ENCODE measurements at regions of chr22 and their contacts with region 1.

Region 1: DNA sequence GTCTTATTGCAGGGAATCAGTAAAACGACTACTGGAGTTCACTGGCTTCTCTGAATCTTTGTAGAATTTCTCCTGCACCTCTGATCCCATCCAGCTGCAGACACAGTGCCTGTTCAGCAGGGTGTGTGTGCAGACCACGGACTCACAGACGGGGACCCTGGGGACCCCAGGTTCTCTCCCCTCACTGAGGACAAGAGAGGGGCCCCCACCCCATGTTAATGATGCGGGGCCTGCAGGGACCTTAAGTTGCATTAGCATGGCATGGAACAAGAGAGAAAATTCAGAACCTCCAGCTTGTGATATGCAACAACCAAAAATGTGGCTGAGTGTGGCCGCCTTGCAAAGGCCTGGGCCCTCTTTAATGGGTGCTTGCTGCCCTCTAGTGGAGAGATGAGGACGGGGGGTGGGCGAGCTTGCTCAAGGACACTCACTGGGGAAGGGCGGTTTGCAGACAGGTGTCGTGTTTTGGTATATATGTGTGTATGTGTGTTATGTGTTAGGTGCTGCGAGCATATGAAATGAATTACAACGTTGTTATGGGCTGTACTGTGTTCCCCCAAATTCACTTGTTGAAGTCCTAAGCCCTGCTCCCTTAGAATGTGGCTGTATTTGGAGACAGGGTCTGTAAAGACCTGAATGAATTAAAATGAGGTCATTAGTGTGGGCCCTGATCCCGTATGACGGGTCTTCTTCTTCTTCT is 84.4 kb upstream of the SEPTIN5 start:
- DNase-seq: peak; percentile 70
- H3K4me3 Mint-ChIP-seq: no peak overlapping the region
- H3K27ac Mint-ChIP-seq: no peak overlapping the region
- H3K4me1 Mint-ChIP-seq: peaks cover 2% of the 10 kb centered on the region
- H3K27me3 Mint-ChIP-seq: peaks cover 5% of the 10 kb centered on the region

Region 2: GRCh38 chr22:19495562-19496323 is 134.1 kb before region 1 on chr22:
- intact Hi-C with region 1: loop called (anchors 5 kb)
- DNase-seq: no peak
- H3K4me3 Mint-ChIP-seq: no peak overlapping the region
- H3K27ac Mint-ChIP-seq: no peak overlapping the region
- H3K4me1 Mint-ChIP-seq: peaks cover 13% of the 10 kb centered on the region
- H3K27me3 Mint-ChIP-seq: no peaks in the 10 kb centered on the region

Region 3: DNA sequence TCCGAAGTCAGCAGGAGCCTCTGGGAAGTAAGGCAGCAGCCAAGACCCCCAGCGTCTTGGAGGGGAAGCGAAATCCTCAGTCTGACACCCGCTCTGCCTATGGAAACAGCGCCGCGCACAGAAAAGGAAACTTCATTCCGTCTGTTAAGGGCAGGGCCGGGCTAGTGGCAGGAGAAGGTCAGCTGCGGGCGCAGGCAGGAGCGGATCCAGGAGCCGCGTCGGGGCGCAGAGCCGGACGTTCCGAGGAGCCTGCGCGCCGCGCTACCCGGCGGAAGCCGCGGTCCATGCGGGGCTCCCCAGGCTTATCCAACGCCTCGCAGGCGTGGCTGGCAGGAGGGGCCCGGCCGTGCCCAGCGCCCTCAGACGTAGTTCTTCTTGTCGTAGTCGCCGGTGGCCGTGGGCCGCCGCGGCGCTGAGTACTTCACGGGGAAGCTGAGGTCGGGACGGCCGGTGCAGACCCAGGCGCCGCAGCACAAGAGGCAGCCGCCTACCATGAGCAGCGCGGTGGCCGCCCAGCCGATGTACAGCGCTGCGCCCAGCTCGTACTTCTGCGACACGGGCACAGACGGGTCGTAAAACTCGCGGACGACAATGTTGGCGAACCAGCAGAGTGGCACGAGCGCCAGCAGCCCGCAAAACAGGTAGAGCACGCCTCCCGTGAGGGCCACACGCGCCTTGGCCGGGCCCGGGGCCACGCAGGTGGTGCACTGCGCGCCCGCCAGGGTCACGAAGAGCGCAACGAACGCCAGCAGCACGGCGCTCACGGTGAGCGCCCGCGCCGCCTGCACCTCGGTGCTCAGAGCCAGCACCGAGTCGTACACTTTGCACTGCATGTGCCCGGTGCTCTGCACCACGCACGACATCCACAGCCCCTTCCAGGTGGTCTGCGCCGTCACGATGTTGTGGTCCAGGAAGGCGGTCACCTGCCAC is 106.4 kb before region 1 on chr22:
- intact Hi-C with region 1: loop called (anchors 10 kb)
- DNase-seq: no peak
- H3K4me3 Mint-ChIP-seq: peak overlapping the region; percentile 65
- H3K27ac Mint-ChIP-seq: no peak overlapping the region
- H3K4me1 Mint-ChIP-seq: peaks cover 5% of the 10 kb centered on the region
- H3K27me3 Mint-ChIP-seq: peaks cover 12% of the 10 kb centered on the region

Measured in activated T-helper 2 cell treated with anti-CD3 and anti-CD28 coated beads, Interferon-gamma antibody, Interleukin-2, Interleukin-4, amounts not matched to agents 10 μg/mL and 5 μg/mL and 100 μg/mL, durations not matched to agents 14 hours and 24 hours and 36 hours (primary cell).